ENCODE measurements at regions of chr4 and their contacts with region 1.

Region 1: GRCh38 chr4:163681208-163681821 is 186.8 kb downstream of the TMA16 start:
- DNase-seq: peak in 1 of 4 donors; percentile 17
- ATAC-seq: peak; percentile 81
- H3K4me3 ChIP-seq: no peak overlapping the region
- H3K27ac ChIP-seq: no peak overlapping the region
- H3K4me1 ChIP-seq: no peaks in the 10 kb centered on the region
- H3K27me3 ChIP-seq: no peaks in the 10 kb centered on the region
- CTCF ChIP-seq: peak; percentile 54 to 67

Region 2: GRCh38 chr4:163554870-163555465 is 126.3 kb before region 1 on chr4:
- intact Hi-C with region 1: loop called in 1 of 2 experiments (anchors 10 kb)
- DNase-seq: no peak
- ATAC-seq: peak; percentile 30
- H3K4me3 ChIP-seq: no peak overlapping the region
- H3K27ac ChIP-seq: no peak overlapping the region
- H3K4me1 ChIP-seq: peaks cover 4 to 41% of the 10 kb centered on the region in 2 donors
- H3K27me3 ChIP-seq: no peaks in the 10 kb centered on the region
- CTCF ChIP-seq: peak; percentile 47 to 73

Region 3: GRCh38 chr4:163857903-163858302 is 176.6 kb after region 1 on chr4:
- intact Hi-C with region 1: no loop called
- DNase-seq: no peak
- ATAC-seq: no peak
- H3K4me3 ChIP-seq: no peak overlapping the region
- H3K27ac ChIP-seq: no peak overlapping the region
- H3K4me1 ChIP-seq: no peaks in the 10 kb centered on the region
- H3K27me3 ChIP-seq: no peaks in the 10 kb centered on the region
- CTCF ChIP-seq: no peak